Endothelial cell of umbilical vein (primary cell): ENCODE measurements at regions of chr19 and their contacts with region 1.

Region 1: DNA sequence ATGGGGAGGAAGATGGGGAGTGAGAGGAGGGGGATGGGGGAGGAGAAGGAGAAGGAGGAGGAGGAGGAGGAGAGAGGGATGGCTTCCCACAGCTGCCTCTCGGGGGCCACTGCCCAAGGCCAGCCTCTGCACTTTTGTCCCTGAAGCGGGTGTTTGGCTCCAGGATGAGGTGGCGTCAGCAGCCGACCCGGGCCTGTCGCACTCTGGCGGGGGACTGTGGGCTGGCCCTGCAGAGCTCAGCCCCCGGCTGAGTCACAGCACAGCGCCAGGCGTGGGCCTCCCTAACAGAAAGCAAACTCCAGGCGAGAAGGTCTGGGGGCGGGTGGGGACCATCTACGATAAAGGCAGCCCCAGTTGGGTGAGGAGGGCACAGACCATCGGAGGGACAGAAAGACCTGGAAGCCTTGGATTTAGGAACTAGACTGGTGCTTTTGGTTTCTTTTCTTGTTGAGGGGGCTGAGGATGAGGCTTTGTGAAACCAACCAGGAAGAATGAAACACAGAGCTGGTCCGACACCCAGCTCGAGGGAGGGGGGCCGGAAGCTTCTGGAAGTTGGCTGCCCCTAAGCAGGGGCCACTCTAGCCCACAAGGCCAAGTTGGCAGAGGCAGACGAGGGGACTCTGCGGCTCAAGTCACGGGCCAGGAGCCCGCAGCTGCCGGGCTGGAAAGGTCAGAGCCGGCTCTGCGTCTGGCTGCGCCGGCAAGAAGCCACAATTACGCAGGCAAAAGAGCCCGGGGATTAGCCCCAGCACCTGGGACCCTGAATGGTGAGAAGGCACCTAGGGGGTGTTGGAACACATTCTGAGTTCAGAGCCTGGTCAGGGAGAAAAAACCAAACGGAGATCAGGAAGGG is 18.2 kb downstream of the LSM4 start:
- DNase-seq: peak; percentile 83
- H3K4me3 ChIP-seq: peak overlapping the region in 2 of 3 experiments; percentile 8 to 35
- H3K27ac ChIP-seq: peak overlapping the region; percentile 98
- H3K4me1 ChIP-seq: peaks cover 21% of the 10 kb centered on the region
- H3K27me3 ChIP-seq: no peaks in the 10 kb centered on the region
- CTCF ChIP-seq: no peak
- POLR2A ChIP-seq: peak; percentile 69

Region 2: GRCh38 chr19:18291590-18292461 is 12.9 kb before region 1 on chr19:
- CTCF ChIA-PET with region 1: interaction called, 9 read pairs
- POLR2A ChIA-PET with region 1: interaction called, 9 read pairs
- dilution Hi-C with region 1: no loop called
- intact Hi-C with region 1: loop called (anchors 1 kb)
- DNase-seq: peak; percentile 72
- H3K4me3 ChIP-seq: peak overlapping the region; percentile 52 to 78 (median 56)
- H3K27ac ChIP-seq: peak overlapping the region; percentile 77
- H3K4me1 ChIP-seq: peaks cover 16% of the 10 kb centered on the region
- H3K27me3 ChIP-seq: no peaks in the 10 kb centered on the region
- CTCF ChIP-seq: no peak
- POLR2A ChIP-seq: peak; percentile 35

Region 3: DNA sequence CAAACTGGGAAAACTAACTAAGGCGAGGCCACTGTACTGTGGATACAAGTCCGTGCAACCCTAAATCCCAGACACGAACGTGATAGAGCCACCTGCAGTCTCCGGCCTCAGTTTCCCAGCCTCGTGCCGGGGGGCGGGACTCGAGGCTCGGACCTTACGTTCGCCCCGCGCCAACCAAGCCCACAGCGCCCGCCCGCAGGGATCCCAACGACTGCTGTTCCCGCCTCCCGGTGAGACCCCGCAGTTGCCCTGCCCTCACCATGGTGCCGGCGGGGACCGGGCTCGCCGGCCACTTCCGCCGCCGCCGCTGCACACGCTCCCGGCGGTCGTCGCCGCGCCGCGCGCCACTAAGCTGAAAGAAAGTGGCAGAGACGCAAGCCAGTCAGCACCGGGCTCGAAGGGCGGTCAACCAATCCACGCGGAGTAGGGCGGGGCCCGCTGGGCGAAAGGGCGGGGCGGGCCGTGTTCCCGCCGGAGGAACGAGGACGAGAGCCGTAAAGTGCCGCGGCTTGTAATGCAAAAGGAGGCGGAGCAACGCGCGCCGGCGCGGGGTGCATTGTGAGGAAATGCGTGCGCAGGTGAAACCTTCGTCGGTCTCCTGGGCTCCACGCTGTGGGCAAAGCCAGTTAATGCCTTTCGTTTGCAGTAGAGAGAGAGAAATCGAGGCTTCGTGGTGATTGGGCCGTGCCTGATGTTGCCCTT is 18.2 kb after region 1 on chr19 and contains the start of gene LSM4:
- CTCF ChIA-PET with region 1: interaction called, 9 read pairs
- POLR2A ChIA-PET with region 1: interaction called, 8 read pairs
- dilution Hi-C with region 1: no loop called
- intact Hi-C with region 1: loop called (anchors 1 kb)
- DNase-seq: peak; percentile 98
- H3K4me3 ChIP-seq: peak within 1 kb of the TSS; percentile 43 to 76 (median 71)
- H3K27ac ChIP-seq: peak within 1 kb of the TSS; percentile 73
- H3K4me1 ChIP-seq: peaks cover 50% of the 10 kb centered on the region
- H3K27me3 ChIP-seq: no peaks in the 10 kb centered on the region
- CTCF ChIP-seq: peak; percentile 5 to 38
- POLR2A ChIP-seq: no peak
- total RNA-seq, gene LSM4: 103 and 118 TPM in 2 replicates

Region 4: GRCh38 chr19:18349524-18350128 is 44.9 kb after region 1 on chr19:
- CTCF ChIA-PET with region 1: no interaction called
- POLR2A ChIA-PET with region 1: no interaction called
- dilution Hi-C with region 1: no loop called
- intact Hi-C with region 1: no loop called
- DNase-seq: peak; percentile 67
- H3K4me3 ChIP-seq: no peak overlapping the region
- H3K27ac ChIP-seq: no peak overlapping the region
- H3K4me1 ChIP-seq: no peaks in the 10 kb centered on the region
- H3K27me3 ChIP-seq: no peaks in the 10 kb centered on the region
- CTCF ChIP-seq: peak; percentile 80 to 86
- POLR2A ChIP-seq: no peak